Head of caudate nucleus (tissue), 42 donors: ENCODE measurements at regions of chr14 and their contacts with region 1.

Region 1: DNA sequence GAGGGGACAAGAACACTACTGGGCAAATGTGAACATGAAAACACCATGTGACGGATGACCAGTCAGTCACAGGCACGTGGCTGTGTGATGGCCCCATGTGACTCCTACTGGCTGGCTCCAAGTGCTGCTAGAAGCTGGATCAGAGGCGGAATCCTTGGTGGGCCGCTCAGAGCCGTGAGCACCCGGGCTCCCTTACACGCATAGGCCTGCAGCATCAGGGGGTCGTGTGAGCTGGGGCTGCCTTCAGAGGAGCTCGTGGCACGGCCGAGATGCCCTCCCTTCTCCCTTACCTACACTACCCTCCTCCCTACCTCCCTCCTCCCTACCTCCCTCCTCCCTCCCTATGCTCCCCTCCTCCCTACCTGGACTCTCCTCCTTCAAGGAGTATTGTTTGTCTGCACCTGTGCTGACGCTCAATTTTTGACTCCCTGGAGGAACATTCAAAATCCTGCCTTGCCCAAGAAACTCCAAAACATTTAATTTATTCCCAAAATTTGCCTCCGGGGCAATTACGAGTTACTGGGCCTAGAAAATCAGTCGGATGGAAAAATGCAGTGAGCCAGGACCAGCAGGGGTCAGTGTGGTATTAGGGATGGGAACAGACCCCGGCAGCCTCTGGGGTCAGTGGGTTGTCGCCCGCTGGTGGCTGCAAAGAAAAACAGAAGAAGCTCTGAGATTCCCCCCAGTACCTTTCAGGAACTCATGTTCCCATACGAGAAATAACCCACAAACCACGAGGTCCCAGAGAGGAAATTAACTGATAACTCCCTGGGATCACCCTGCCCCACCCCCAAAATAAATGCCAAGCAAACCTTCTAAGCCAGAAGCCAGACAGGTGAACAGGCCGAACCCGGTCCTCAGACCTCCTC is 61.2 kb downstream of the C14orf132 start:
- DNase-seq: peak; percentile 63 to 96 (median 87)

Region 2: GRCh38 chr14:95993768-95994592 is 106.4 kb before region 1 on chr14:
- intact Hi-C with region 1: loop called (anchors 5 kb)
- DNase-seq: peak in 30 of 42 donors; percentile 11 to 85 (median 50)

Region 3: DNA sequence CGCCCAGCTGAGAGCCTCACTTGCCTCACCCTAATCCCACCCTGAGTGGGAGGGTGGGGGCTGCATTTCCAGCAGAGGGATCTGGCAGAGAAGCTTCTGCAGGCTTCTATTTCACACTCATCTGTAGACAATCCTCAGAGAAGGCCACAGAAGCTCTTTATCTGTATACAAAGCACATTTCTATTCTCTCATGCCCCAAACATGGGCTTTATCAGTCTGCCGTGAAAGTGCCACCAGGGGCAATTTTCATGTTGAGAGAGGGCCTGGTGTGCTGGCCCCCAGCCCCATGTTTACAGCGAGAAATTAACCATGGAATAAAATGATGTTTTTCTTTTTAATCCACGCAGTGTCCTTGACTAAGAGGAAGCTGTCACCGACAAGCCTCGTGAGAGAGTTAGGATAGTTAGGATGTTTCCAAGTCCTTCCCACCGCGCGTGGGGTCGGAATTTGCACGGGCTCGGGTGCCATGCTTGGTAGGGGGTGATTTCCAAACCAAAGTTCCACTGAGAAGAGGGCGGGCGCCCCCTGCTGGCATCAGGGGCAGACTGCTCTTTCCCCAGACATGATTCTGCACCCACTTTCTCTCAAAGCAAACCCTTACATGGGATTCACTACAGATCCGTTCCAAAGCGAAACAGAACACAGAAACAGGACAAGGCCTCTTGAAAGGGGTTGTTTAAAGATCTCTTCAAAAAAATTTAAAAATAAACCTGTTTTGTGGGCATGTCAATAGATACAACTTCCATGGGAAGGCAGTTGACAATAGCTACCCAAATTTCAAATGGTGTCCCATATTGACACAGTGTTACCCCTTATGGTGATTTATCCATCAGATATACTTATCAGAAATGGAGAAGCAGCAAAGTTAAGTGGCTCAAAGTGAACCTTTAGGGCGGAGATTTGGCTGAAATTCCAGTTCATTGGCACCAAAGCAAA is 175.1 kb after region 1 on chr14:
- intact Hi-C with region 1: loop called (anchors 5 kb)
- DNase-seq: peak; percentile 70 to 96 (median 88)

Region 4: GRCh38 chr14:96424109-96424989 is 324.0 kb after region 1 on chr14:
- intact Hi-C with region 1: loop called (anchors 10 kb)
- DNase-seq: peak in 28 of 42 donors; percentile 4 to 78 (median 36)